OCI-LY7 (cell line): ENCODE measurements at regions of chr13 and their contacts with region 1.

Region 1: DNA sequence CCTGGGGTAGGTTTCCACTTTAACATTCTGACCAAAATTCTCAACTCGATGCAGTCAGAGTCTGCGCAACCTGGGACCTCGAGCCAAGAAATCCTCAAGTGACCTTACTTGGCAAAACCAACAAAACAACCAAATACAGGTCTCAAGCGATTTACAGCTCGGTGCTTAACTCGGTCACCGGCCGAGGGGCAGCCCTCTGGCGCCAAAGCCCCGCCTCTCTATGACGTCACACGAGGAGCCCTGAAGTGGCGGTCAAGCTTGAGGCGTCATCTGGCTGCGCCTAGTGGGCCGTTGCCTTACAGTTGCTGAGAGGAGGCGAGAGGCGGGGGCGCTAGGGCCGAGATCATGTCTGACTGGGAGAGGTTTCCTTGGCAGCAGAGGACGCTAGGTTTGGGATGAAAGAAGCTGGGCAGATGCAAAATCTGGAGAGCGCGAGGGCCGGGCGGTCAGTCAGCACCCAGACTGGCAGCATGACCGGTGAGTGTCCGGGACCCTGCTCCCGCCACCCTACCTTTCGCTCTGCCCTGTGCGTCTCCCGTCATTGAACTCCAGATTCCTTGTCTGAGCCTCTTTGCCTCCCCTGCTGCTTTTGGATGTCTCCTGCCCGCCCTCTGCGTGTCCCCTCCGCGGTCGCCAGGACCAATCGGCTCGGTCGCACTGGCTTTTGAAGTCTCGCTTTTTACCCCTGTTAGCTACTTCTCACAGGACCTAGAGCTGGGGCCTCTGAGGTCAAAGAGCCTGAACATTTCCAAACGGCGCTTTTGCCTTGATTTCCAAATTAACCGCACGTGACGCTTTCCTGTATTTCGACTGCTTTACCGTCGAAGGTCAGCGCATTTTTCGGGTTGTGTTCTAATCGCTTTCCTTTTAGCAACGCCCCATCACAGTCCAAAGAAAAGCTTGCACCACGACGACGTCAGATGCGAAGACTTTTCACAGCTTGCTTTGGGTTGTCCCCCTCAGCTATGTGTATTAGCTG is at the start of gene CDADC1:
- DNase-seq: peak; percentile 97
- H3K4me3 ChIP-seq: peak within 1 kb of the TSS; percentile 83
- H3K27ac ChIP-seq: peak within 1 kb of the TSS; percentile 25
- H3K4me1 ChIP-seq: peaks cover 11% of the 10 kb centered on the region
- CTCF ChIP-seq: 0 out of 2 replicates have a peak, but pooled peaks have one; percentile 16
- total RNA-seq, gene CDADC1: 9.1 and 18.8 TPM in 2 replicates

Region 2: DNA sequence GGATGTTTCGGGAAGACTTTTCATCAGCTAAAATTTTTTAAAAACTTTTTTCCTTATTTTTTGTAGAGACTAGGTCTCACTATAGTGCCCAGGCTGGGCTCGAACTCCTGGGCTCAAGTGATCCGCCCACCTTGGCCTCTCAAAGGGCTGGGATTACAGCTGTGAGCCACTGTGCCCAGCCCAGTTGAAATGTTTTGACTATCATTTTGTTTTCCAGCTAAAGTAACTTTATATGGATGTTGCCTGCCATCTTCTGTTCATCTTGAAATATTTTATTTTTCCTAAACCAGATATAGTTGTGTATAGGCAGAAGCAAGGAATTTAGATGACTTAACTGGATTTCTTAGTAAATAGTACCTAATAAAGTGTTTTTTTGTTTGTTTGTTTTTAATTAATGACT is 189.0 kb after region 1 on chr13:
- CTCF ChIA-PET with region 1: no interaction called
- POLR2A ChIA-PET with region 1: interaction called, 3 read pairs
- intact Hi-C with region 1: loop called (anchors 5 kb)
- DNase-seq: peak; percentile 40
- H3K4me3 ChIP-seq: no peak overlapping the region
- H3K27ac ChIP-seq: no peak overlapping the region
- H3K4me1 ChIP-seq: peaks cover 22% of the 10 kb centered on the region
- CTCF ChIP-seq: peak; percentile 49

Region 3: DNA sequence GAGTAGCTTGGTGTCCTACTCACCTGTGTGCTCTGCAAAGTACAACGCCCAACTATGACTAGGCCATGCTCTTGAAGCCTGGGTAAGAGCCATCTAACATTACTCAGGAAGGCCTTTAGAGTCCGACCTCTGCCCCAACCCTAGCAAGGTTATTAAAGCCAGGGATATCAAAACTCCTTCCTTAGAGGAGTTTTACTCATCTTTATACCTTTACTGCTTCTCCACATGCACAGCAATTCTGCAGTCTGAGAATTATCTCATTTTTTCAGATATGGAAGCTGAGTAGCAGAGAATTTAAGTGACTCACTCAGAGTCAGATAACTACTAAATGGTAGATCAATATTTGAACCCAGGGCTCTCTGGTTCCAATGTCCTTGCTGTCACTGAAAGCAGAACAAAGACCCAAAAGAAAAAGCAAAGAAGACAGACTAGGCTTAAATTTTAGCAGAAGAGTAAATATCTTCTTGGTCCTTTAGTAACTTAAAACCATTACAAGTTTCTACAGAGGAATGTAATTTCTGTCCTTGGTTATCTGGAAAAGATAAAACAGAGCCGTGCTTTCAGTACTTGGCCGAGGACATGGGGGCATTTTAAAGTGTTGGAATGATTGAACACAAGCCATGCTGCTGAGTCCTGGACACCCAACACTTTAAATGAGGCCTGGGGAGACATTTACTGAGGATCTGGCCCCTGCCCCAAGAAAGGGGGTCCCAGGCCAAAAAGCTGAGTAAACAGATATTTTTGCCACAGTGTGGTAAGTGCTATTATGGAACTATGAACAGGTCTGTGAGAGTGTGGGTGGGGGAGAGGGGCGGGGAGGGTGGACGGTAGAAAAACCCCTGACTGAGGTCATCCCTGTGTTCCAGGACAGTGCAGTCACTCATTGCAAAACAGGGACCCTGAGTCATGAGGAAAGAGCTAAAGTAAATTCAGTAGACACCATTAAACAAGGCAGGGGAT is 562.9 kb after region 1 on chr13:
- CTCF ChIA-PET with region 1: no interaction called
- POLR2A ChIA-PET with region 1: no interaction called
- intact Hi-C with region 1: no loop called
- DNase-seq: no peak
- H3K4me3 ChIP-seq: no peak overlapping the region
- H3K27ac ChIP-seq: no peak overlapping the region
- H3K4me1 ChIP-seq: no peaks in the 10 kb centered on the region
- CTCF ChIP-seq: no peak